B cell (primary cell): ENCODE measurements at regions of chr7 and their contacts with region 1.

Region 1: DNA sequence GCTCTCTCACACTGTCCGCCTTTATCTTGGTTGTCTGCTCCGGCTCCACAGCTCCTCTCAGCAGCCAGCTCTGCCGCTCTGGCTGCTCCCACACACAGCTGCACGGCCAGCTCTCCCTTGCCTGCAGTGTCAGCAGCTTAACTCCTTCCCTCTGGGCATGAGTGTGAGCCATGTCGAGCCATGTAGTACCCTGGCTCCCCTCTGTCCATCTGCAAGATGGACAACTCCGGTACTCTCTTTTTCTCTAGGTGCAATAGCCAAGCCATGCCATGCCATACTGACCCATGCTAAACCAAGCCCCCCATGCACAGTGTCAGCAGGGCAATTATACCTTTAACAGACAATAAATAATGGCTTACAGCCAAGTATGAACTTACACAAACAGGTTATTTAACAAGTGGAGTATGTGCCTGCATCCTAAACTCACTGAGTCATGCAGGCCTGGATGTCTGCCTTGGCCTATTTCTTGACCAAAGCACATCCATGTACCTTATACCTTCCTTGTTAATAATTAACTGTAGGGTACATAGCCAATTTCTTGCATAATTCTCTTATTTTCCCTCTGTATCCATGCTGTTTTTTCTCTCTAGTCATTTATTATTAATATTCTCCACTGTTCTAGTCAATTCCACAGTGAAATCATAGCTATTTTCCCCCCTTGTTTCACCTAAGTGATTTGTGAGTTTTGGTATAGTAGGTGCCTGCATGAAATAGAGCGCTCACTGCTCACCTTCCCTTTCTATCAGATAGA is 170.9 kb downstream of the CDK14 start:
- DNase-seq: no peak
- ATAC-seq: no peak
- H3K4me3 ChIP-seq: no peak overlapping the region
- H3K4me3 Mint-ChIP-seq: no peak overlapping the region
- H3K27ac ChIP-seq: no peak overlapping the region
- H3K27ac Mint-ChIP-seq: peak overlapping the region; percentile 57
- H3K4me1 ChIP-seq: peaks cover 13 to 19% of the 10 kb centered on the region in 2 donors
- H3K4me1 Mint-ChIP-seq: peaks cover 55% of the 10 kb centered on the region
- H3K27me3 ChIP-seq: no peaks in the 10 kb centered on the region
- H3K27me3 Mint-ChIP-seq: no peaks in the 10 kb centered on the region
- CTCF ChIP-seq: no peak

Region 2: DNA sequence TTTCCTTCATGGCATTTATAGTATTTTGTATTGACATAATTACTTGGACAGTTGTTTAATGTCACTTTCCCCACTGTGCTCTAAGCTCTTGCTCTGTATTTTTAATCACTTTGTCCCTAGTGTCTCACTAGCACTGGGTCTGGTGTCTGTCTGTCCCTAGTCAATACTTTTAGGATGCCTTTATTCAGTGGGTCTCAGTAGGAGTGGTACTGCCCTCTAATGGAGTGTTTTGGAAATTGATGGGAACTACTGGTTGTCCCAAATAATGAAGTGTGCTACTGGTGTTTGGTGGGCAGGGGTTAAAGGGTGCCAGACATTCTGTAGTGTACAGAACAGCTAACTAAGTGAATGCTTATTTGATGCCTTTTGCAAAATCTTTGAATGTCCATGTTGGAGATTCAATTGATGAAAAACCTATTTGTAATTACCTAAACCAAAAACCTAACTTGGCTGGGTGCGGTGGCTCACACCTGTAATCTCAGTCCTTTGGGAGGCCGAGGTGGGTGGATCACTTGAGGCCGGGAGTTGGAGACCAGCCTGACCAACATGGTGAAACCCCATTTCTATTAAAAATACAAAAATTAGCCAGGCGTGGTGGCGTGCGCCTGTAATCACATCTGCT is 137.6 kb before region 1 on chr7:
- CTCF ChIA-PET with region 1: no interaction called
- POLR2A ChIA-PET with region 1: no interaction called
- intact Hi-C with region 1: no loop called
- DNase-seq: peak; percentile 75
- ATAC-seq: peak; percentile 86
- H3K4me3 ChIP-seq: no peak overlapping the region
- H3K4me3 Mint-ChIP-seq: no peak overlapping the region
- H3K27ac ChIP-seq: no peak overlapping the region
- H3K27ac Mint-ChIP-seq: no peak overlapping the region
- H3K4me1 ChIP-seq: no peaks in the 10 kb centered on the region
- H3K4me1 Mint-ChIP-seq: peaks cover 13% of the 10 kb centered on the region
- H3K27me3 ChIP-seq: no peaks in the 10 kb centered on the region
- H3K27me3 Mint-ChIP-seq: no peaks in the 10 kb centered on the region
- CTCF ChIP-seq: peak; percentile 75

Region 3: DNA sequence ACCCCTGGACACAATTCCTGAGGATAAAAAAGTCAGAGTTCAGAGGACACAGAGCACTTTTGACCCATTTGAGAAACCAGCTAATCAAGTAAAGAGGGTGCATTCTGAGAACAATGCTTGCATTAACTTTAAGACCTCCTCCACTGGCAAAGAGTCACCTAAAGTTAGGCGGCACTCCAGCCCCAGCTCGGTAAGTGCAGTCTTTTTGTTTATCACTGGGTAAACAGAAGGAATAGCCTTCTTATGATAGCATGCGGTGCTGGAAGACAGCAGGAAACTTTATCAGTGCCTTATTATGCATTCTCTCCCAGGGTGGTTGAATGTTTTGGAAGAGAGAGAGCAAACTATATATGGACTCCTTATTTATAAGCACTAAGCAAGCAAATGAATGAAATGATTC is 40.4 kb before region 1 on chr7:
- CTCF ChIA-PET with region 1: interaction called, 3 read pairs
- POLR2A ChIA-PET with region 1: no interaction called
- intact Hi-C with region 1: loop called (anchors 5 kb)
- DNase-seq: no peak
- ATAC-seq: no peak
- H3K4me3 ChIP-seq: peak overlapping the region in 4 of 5 experiments; percentile 9 to 59 (median 23)
- H3K4me3 Mint-ChIP-seq: peak overlapping the region; percentile 79
- H3K27ac ChIP-seq: peak overlapping the region; percentile 30 to 84
- H3K27ac Mint-ChIP-seq: peak overlapping the region; percentile 81
- H3K4me1 ChIP-seq: peaks cover 45 to 70% of the 10 kb centered on the region in 2 donors
- H3K4me1 Mint-ChIP-seq: peaks cover 81% of the 10 kb centered on the region
- H3K27me3 ChIP-seq: no peaks in the 10 kb centered on the region
- H3K27me3 Mint-ChIP-seq: no peaks in the 10 kb centered on the region
- CTCF ChIP-seq: no peak